Common myeloid progenitor, CD34-positive (primary cell): ENCODE measurements at regions of chr6 and their contacts with region 1.

Region 1: DNA sequence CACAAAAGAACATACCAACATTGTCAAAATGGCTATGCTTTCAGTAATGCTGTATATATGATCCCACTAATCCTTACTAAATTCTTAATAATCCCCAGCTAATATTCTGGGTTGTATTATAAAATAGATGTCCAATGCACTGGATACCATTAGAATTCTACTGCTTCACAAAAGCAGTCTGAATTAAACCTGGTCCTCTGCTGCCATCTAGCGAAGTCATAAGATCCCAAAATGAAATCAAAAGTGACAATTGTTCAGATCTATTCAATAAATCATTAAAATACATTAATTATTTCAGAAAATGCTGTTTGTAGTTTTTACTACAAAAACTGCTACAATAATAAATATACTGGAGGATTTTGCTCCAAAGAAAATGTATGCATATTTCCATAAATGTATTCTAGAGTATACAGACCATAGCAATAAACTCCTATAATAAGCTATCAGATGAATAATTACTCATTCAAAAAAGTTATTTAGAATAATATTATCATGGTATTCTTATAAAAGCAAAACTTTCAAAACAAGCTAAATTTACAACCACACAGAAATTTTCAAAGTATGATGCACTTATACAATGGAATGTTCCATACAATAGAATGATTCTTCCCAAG is 92.6 kb downstream of the RNGTT start:
- DNase-seq: peak; percentile 57 to 83 (median 79)
- H3K4me3 ChIP-seq: no peak overlapping the region
- H3K27ac ChIP-seq: no peak overlapping the region
- H3K4me1 ChIP-seq: peaks cover 0 to 6% (median 0%) of the 10 kb centered on the region in 4 experiments
- H3K27me3 ChIP-seq: no peaks in the 10 kb centered on the region

Region 2: DNA sequence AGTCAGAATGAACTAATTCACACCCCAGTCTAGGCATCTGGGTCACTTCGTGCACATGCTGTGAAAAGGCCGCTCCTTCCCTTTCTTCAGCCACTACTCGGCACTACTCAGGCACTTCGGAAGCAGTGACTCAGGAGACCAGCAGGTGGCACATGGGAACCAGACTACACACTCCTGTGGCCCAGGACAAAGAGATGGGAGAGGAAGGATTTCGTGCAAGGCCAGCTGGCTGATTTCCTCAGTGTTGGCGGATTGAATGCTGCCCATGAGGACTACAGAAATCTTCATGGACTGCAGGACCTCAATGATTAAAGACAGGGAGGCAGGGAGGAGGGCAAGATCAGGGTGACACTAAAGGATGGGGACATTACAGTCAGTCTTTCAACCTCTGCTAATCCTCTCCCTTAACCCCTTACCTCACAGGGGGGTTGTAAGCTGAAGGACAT is 941.0 kb before region 1 on chr6:
- CTCF ChIA-PET with region 1: interaction called, 70 read pairs
- POLR2A ChIA-PET with region 1: no interaction called
- DNase-seq: peak; percentile 67 to 79 (median 70)
- H3K4me3 ChIP-seq: no peak overlapping the region
- H3K27ac ChIP-seq: no peak overlapping the region
- H3K4me1 ChIP-seq: peaks cover 0 to 7% (median 1%) of the 10 kb centered on the region in 4 experiments
- H3K27me3 ChIP-seq: peaks cover 0 to 2% (median 0%) of the 10 kb centered on the region in 5 experiments

Region 3: GRCh38 chr6:88860310-88860709 is 10.5 kb before region 1 on chr6:
- CTCF ChIA-PET with region 1: interaction called, 10 read pairs
- POLR2A ChIA-PET with region 1: no interaction called
- DNase-seq: no peak
- H3K4me3 ChIP-seq: no peak overlapping the region
- H3K27ac ChIP-seq: no peak overlapping the region
- H3K4me1 ChIP-seq: peaks cover 0 to 3% (median 0%) of the 10 kb centered on the region in 4 experiments
- H3K27me3 ChIP-seq: no peaks in the 10 kb centered on the region

Region 4: DNA sequence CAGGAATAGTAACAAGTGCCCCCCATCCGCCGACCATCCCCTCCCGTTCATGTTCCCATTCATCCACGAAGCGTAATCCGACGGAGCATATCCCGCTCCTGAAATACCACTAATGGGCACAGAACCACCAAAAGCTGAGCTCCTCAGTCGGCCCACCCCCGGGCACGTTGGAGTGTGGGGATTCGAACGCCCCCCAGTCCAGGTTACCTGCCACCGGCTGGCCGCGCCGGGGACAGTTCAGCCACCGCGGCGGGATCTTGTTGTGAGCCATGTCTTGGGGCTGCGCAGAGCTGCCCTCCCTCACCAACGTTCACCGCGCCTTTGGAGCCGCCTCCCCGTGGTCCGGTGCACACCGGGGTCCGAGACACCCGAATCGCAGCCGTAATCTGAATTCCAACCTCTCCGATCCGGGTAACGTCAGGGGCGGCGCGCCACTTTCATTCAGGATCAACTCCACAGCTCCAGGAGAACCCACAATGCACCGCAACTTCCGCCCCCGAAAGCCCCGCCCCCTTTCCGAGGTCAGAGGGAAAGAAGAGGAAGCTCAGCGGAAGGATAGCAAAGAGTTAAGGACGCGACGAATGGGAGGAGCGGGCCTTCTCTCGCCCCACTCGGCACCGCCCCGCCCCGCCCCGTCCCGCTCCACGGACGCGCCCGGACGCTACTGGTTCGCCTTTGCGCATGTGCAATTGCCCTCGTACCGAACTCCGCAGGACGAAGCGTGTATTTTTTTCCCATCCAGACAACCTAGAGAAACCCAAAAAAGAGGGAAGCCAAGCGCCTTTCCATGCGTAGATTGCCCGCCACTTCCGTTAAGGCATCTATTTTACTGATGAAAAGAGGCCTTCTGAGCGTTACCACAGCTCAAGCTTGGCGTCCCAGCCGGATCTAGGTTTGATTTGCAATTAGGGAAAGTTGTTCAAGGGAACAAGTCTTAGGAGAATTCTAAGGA is 92.6 kb after region 1 on chr6 and contains the start of gene RNGTT:
- CTCF ChIA-PET with region 1: no interaction called
- POLR2A ChIA-PET with region 1: no interaction called
- DNase-seq: peak; percentile 97 to 98 (median 98)
- H3K4me3 ChIP-seq: peak within 1 kb of the TSS; percentile 76 to 98 (median 94)
- H3K27ac ChIP-seq: peak within 1 kb of the TSS; percentile 70 to 84
- H3K4me1 ChIP-seq: peaks cover 3 to 21% (median 13%) of the 10 kb centered on the region in 4 experiments
- H3K27me3 ChIP-seq: no peaks in the 10 kb centered on the region